ENCODE measurements at regions of chr6 and their contacts with region 1.

Region 1: DNA sequence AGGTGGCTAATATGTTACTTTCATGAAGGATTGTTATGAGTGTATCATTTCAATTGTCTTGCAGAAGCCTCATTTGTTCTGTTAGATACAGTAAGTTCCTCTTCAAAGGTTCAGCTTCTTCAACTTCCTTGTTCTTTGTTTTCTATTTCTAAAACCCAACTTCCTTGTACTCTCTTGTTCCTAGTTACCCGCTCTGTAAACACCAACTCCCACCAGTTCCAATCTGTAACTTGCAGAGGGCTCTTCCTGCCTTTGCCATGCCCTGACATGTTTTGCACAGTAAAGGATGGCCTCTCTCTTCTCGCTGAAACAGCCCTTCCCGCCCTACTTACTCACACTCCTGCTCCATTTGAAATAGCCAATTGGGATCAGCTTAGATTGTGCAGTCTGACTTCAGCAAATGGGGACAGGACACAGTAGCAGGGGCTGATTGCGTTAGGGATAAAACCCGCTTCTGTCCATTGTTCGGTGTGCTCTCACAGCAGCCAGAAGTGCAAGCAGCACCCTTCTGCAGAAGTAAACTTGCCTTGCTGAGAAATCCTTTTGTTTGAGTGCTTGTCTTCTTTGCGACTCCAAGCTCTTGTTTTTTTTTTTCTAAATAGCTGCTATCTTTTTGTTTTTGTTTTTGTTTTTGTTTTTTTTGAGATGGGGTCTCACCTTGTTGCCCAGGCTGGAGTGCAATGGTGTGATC is 45.9 kb upstream of the POU5F1 start:
- DNase-seq: no peak
- H3K4me3 ChIP-seq: no peak overlapping the region
- H3K4me3 Mint-ChIP-seq: no peak overlapping the region
- H3K27ac ChIP-seq: no peak overlapping the region
- H3K27ac Mint-ChIP-seq: no peak overlapping the region
- H3K4me1 ChIP-seq: no peaks in the 10 kb centered on the region
- H3K4me1 Mint-ChIP-seq: peaks cover 0 to 5% (median 1%) of the 10 kb centered on the region in 4 donors
- H3K27me3 ChIP-seq: no peaks in the 10 kb centered on the region
- H3K27me3 Mint-ChIP-seq: no peaks in the 10 kb centered on the region

Region 2: GRCh38 chr6:30974488-30975252 is 241.7 kb before region 1 on chr6:
- CTCF ChIA-PET with region 1: no interaction called
- POLR2A ChIA-PET with region 1: no interaction called
- intact Hi-C with region 1: no loop called
- DNase-seq: no peak
- H3K4me3 ChIP-seq: no peak overlapping the region
- H3K4me3 Mint-ChIP-seq: no peak overlapping the region
- H3K27ac ChIP-seq: no peak overlapping the region
- H3K27ac Mint-ChIP-seq: no peak overlapping the region
- H3K4me1 ChIP-seq: no peaks in the 10 kb centered on the region
- H3K4me1 Mint-ChIP-seq: no peaks in the 10 kb centered on the region
- H3K27me3 ChIP-seq: no peaks in the 10 kb centered on the region
- H3K27me3 Mint-ChIP-seq: peaks cover 14 to 25% of the 10 kb centered on the region in 2 donors

Region 3: GRCh38 chr6:31114970-31115849 is 101.1 kb before region 1 on chr6:
- CTCF ChIA-PET with region 1: no interaction called
- POLR2A ChIA-PET with region 1: no interaction called
- intact Hi-C with region 1: no loop called
- DNase-seq: peak in 1 of 5 donors; percentile 40
- H3K4me3 ChIP-seq: no peak overlapping the region
- H3K4me3 Mint-ChIP-seq: peak overlapping the region in 2 of 8 donors; percentile 16 to 41
- H3K27ac ChIP-seq: no peak overlapping the region
- H3K27ac Mint-ChIP-seq: peak overlapping the region in 4 of 7 donors; percentile 12 to 80 (median 46)
- H3K4me1 ChIP-seq: peaks cover 5% of the 10 kb centered on the region
- H3K4me1 Mint-ChIP-seq: peaks cover 2 to 8% (median 5%) of the 10 kb centered on the region in 4 donors
- H3K27me3 ChIP-seq: no peaks in the 10 kb centered on the region
- H3K27me3 Mint-ChIP-seq: peaks cover 2 to 3% of the 10 kb centered on the region in 2 donors

Region 4: DNA sequence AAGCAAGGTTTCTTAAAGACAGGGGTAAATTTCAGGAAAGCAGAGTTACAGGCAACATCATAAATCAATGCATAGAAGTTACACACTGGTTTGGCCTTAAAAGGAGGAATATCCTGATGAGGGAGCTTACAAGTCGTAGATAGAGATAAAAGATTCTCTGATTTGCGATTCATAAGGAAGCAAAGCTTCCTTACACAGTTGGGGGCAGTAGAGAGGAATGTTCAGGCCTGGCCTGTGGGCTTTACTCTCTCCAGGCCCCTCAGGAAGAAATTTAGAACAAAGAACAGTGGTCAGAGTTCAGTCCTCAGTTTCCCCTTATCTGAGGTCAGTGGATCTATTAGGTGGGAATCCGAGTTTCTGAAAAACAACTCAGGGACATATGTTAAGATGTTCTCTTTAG is 36.3 kb after region 1 on chr6:
- CTCF ChIA-PET with region 1: interaction called, 3 read pairs
- POLR2A ChIA-PET with region 1: no interaction called
- intact Hi-C with region 1: loop called (anchors 1 kb)
- DNase-seq: no peak
- H3K4me3 ChIP-seq: no peak overlapping the region
- H3K4me3 Mint-ChIP-seq: no peak overlapping the region
- H3K27ac ChIP-seq: no peak overlapping the region
- H3K27ac Mint-ChIP-seq: no peak overlapping the region
- H3K4me1 ChIP-seq: no peaks in the 10 kb centered on the region
- H3K4me1 Mint-ChIP-seq: peaks cover 0 to 5% (median 4%) of the 10 kb centered on the region in 4 donors
- H3K27me3 ChIP-seq: no peaks in the 10 kb centered on the region
- H3K27me3 Mint-ChIP-seq: peaks cover 8 to 10% of the 10 kb centered on the region in 2 donors